ENCODE measurements at regions of chr11 and their contacts with region 1.

Region 1: GRCh38 chr11:59802639-59803176 is 7.9 kb downstream of the MRPL16 start:
- DNase-seq: peak; percentile 79
- H3K4me3 Mint-ChIP-seq: no peak overlapping the region
- H3K27ac Mint-ChIP-seq: no peak overlapping the region
- H3K4me1 Mint-ChIP-seq: peaks cover 15% of the 10 kb centered on the region
- H3K27me3 Mint-ChIP-seq: no peaks in the 10 kb centered on the region

Region 2: GRCh38 chr11:59771605-59772004 is 31.1 kb before region 1 on chr11:
- CTCF ChIA-PET with region 1: no interaction called
- POLR2A ChIA-PET with region 1: no interaction called
- DNase-seq: no peak
- H3K4me3 Mint-ChIP-seq: peak overlapping the region; percentile 35
- H3K27ac Mint-ChIP-seq: peak overlapping the region; percentile 90
- H3K4me1 Mint-ChIP-seq: peaks cover 43% of the 10 kb centered on the region
- H3K27me3 Mint-ChIP-seq: no peaks in the 10 kb centered on the region

Region 3: GRCh38 chr11:59791639-59792038 is 11.1 kb before region 1 on chr11:
- CTCF ChIA-PET with region 1: interaction called, 10 read pairs
- POLR2A ChIA-PET with region 1: no interaction called
- DNase-seq: no peak
- H3K4me3 Mint-ChIP-seq: no peak overlapping the region
- H3K27ac Mint-ChIP-seq: no peak overlapping the region
- H3K4me1 Mint-ChIP-seq: peaks cover 16% of the 10 kb centered on the region
- H3K27me3 Mint-ChIP-seq: no peaks in the 10 kb centered on the region

Region 4: DNA sequence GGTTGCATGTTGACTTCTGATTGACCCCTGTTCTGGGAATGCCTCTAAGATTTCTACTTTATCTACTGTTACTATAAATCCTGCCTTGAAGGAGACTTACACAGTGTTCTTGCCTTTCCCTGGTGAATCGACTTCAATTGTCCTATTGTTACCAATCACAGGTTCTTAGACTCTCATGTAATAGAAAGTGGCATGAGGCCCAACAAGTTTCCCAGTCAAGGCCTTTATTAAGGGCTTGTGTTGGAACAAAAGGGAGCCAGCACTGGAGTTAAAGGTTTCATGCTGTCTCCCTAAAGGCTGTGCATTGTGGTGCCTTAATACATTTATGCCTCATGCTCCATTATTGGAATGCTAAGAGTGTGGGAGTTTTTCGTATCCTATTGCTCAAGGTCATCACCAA is 309.1 kb after region 1 on chr11:
- CTCF ChIA-PET with region 1: no interaction called
- POLR2A ChIA-PET with region 1: no interaction called
- DNase-seq: no peak
- H3K4me3 Mint-ChIP-seq: no peak overlapping the region
- H3K27ac Mint-ChIP-seq: no peak overlapping the region
- H3K4me1 Mint-ChIP-seq: no peaks in the 10 kb centered on the region
- H3K27me3 Mint-ChIP-seq: peaks cover 3% of the 10 kb centered on the region